Body of pancreas (tissue), 4 donors: ENCODE measurements at regions of chr5 and their contacts with region 1.

Region 1: DNA sequence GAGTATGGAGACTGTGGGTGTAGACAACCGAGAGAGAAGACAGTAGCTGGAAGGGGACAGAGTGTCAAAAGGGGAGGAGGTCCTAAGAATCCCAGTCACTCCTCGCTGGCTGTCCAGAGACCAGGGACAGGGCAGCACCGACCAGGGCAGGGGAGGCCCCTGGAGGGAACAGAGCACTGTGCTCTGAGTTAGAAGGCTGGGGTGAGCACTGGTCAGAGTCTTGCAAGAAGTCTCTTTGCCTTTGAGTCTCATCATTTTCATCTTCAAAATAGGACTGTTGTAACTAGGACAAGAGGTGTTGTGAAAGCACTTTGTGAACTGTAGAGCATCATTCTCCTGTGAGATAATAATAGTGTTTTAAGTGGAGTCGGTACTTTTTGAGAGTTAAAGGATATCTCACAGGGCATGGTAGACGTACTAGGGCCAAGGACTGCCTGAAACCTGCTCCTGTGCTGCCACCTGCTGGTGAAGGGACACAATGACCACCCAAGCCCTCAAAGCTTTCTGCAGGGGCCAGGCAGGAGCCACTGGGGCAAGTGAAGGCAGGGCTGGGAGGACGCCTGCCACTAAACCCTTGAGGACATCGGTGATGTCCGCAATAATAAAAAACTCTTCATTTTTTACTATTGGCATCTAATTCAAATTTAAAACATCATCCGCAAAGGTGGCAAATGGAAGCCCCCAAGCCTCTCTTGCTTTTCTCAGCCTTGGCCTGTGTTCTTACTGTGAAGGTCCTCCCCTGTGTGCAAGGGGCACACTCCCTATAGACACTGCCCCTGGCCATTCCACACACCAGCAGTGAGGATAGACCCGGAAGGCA is 28.2 kb downstream of the SLC6A7 start:
- DNase-seq: peak; percentile 84 to 85 (median 84)
- ATAC-seq: peak; percentile 85
- H3K4me3 ChIP-seq: no peak overlapping the region
- H3K27ac ChIP-seq: no peak overlapping the region
- H3K4me1 ChIP-seq: no peaks in the 10 kb centered on the region
- H3K27me3 ChIP-seq: no peaks in the 10 kb centered on the region
- CTCF ChIP-seq: peak; percentile 76 to 92 (median 87)
- POLR2A ChIP-seq: no peak

Region 2: GRCh38 chr5:150129813-150130492 is 88.1 kb before region 1 on chr5:
- intact Hi-C with region 1: loop called (anchors 5 kb)
- DNase-seq: peak; percentile 77 to 80 (median 78)
- ATAC-seq: peak; percentile 89
- H3K4me3 ChIP-seq: no peak overlapping the region
- H3K27ac ChIP-seq: no peak overlapping the region
- H3K4me1 ChIP-seq: peaks cover 8% of the 10 kb centered on the region
- H3K27me3 ChIP-seq: no peaks in the 10 kb centered on the region
- CTCF ChIP-seq: peak; percentile 79 to 93 (median 87)
- POLR2A ChIP-seq: no peak

Region 3: DNA sequence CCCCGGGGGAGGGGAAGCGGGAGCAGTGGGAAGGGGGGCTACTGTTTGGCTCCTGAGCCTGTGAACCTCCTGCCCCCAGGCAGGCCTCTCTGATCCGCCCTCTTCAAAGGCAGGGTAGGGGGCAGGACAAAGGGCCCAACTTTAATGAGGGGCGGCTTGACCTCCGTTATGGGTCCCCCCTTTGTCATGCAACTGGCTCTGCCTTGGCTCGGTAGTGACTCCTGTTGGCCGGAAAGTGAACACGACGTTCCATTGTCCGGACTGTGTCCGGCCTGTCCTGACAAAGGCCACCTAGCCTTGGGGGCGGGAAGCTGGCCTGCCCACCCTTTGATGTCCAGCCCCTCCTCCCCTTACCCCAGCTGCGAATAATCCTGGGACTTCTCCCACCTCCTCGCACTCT is 50.2 kb before region 1 on chr5:
- intact Hi-C with region 1: loop called (anchors 5 kb)
- DNase-seq: no peak
- ATAC-seq: no peak
- H3K4me3 ChIP-seq: no peak overlapping the region
- H3K27ac ChIP-seq: no peak overlapping the region
- H3K4me1 ChIP-seq: no peaks in the 10 kb centered on the region
- H3K27me3 ChIP-seq: peaks cover 0 to 11% of the 10 kb centered on the region in 2 donors
- CTCF ChIP-seq: no peak
- POLR2A ChIP-seq: no peak